ENCODE measurements at regions of chr3 and their contacts with region 1.

Region 1: DNA sequence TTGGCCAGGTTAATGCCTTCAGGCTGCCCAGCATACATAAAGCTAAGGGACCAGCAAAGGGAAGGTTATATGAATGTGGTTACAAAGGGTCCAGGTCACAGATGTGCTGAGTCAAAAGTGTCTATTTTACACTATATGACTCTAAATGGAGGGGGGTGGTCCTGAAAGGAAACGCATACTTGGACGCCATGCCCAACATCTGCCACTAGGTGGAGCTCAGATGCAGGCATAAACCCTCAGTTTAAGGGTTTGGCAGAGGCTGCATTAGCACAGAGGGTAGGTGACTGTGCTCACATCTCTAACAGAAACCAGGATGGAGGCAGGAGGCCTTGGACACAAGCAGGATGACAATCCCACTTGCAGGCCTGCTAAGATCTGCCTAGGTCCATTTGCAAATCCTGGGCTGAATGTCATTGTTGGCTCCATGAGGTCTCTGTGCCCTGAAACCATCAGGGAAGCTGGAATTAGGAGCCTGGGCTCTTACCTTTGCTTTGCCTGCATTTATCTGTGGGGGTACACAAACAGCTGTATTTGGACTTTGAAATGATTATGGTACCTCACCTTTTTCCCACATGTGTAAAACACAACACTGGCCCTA is 55.8 kb downstream of the ZNF621 start:
- DNase-seq: peak; percentile 76
- H3K4me3 ChIP-seq: no peak overlapping the region
- H3K27ac ChIP-seq: no peak overlapping the region
- H3K4me1 ChIP-seq: no peaks in the 10 kb centered on the region
- CTCF ChIP-seq: peak; percentile 96

Region 2: DNA sequence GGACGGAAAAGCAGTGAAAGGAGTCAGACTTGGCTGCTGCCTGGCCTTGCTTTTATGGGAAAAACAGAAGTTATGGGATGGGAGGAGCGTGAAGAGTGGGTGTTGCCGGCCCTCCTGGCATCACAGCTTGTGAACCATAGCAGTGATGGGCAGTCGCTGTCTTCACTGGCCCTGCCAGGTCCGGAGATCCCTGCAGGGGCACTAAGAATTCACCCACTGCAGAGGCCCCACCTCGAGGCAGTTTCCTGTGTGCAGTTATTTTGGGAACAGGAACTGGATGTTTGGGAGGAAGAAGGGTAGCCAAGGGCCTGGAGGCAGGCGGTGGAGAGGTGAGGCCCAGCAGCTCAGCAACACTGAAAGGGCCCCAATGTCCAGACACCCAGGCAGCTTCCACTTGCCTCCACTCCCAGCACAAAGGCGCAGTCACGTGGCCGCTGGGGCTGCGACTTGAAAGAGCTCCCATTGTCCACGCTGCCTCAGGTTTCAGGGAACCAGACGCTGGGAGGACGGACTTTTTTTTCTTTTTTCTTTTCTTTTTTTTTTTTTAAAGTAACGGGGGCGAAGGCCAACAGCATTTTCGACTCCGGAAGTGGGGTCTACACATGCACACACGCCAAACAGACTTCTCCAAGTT is 199.8 kb after region 1 on chr3:
- CTCF ChIA-PET with region 1: no interaction called
- POLR2A ChIA-PET with region 1: no interaction called
- intact Hi-C with region 1: loop called (anchors 10 kb)
- DNase-seq: no peak
- H3K4me3 ChIP-seq: no peak overlapping the region
- H3K27ac ChIP-seq: no peak overlapping the region
- H3K4me1 ChIP-seq: no peaks in the 10 kb centered on the region
- CTCF ChIP-seq: no peak

Region 3: GRCh38 chr3:41198950-41199865 is 618.6 kb after region 1 on chr3 and contains the start of gene CTNNB1:
- CTCF ChIA-PET with region 1: no interaction called
- POLR2A ChIA-PET with region 1: no interaction called
- intact Hi-C with region 1: loop called (anchors 5 kb)
- DNase-seq: peak; percentile 95
- H3K4me3 ChIP-seq: peak within 1 kb of the TSS; percentile 99
- H3K27ac ChIP-seq: peak within 1 kb of the TSS; percentile 85
- H3K4me1 ChIP-seq: peaks cover 32% of the 10 kb centered on the region
- CTCF ChIP-seq: no peak
- total RNA-seq, gene CTNNB1: 201 and 237 TPM in 2 replicates

Region 4: DNA sequence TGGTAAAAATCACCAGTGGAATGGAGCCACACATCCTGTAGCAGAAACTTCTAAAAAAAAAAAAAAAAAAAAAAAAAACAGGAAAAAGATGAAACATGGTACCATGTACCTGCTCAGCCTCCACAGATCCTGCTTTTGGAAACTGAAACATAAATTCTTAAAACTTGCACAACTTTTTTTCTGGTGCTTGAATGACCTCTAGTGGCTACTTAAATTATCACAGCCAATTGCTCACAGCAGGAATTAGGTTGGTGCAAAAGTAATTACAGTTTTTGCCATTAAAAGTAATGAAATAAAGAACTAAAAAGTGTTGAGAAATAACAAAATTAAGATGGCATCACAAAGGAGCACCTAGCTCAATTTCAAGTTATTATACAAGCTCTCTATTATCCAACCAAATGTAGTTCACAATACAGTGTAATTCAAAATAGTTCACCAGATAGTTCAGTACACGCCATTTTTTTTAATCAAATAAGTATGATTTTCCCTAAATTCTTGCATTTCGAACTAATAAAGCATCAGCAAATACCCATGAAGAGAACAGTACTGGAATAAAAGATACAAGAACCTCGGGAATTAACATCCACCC is 1300.7 kb after region 1 on chr3:
- CTCF ChIA-PET with region 1: no interaction called
- POLR2A ChIA-PET with region 1: no interaction called
- intact Hi-C with region 1: loop called (anchors 2 kb)
- DNase-seq: peak; percentile 64
- H3K4me3 ChIP-seq: no peak overlapping the region
- H3K27ac ChIP-seq: no peak overlapping the region
- H3K4me1 ChIP-seq: no peaks in the 10 kb centered on the region
- CTCF ChIP-seq: peak; percentile 89

Measured in OCI-LY7 (cell line).